WTC11 (cell line): ENCODE measurements at regions of chr10 and their contacts with region 1.

Region 1: GRCh38 chr10:80924063-80924952 is 386.6 kb downstream of the SH2D4B start:
- DNase-seq: peak; percentile 69
- ATAC-seq: peak; percentile 86
- H3K4me3 Mint-ChIP-seq: no peak overlapping the region
- H3K27ac Mint-ChIP-seq: no peak overlapping the region
- H3K4me1 Mint-ChIP-seq: peaks cover 44% of the 10 kb centered on the region
- H3K27me3 Mint-ChIP-seq: no peaks in the 10 kb centered on the region; the same call in 1 of the 2 replicates
- CTCF ChIP-seq: peak; percentile 45

Region 2: GRCh38 chr10:80699602-80700039 is 224.7 kb before region 1 on chr10:
- CTCF ChIA-PET with region 1: interaction called, 19 read pairs
- POLR2A ChIA-PET with region 1: no interaction called
- DNase-seq: peak; percentile 95
- ATAC-seq: peak; percentile 93
- H3K4me3 Mint-ChIP-seq: no peak overlapping the region
- H3K27ac Mint-ChIP-seq: no peak overlapping the region
- H3K4me1 Mint-ChIP-seq: peaks cover 26% of the 10 kb centered on the region
- H3K27me3 Mint-ChIP-seq: no peaks in the 10 kb centered on the region
- CTCF ChIP-seq: peak; percentile 84

Region 3: DNA sequence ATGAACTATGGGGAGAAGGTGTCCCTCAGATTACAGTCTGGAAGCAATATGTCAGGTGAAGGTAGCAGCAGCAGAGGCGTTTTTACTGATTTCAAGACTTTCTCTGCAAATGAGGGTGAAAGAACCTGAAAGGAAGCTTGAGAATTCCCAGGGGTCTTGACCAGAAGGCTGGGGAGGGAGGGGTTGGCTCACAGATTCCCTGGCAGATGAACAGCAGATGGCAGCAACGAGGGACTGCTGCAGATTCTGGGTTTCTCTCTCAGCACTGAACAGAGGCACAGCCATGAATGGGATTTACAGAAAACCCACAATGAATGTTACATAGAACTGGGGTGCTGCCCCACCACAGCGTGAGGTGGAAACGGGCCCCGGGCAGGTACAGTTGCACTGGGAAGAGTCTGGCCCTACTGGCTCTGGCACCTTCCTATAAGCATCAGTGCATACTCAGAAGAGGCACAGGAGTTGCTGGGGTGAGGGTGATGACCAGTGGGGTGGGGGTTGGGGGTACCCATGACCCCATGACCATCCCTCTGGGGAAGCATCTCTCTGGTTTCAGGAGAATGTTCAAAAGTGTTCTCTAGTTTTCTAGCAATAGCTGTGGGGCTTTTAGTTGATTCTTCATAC is 68.8 kb before region 1 on chr10:
- CTCF ChIA-PET with region 1: interaction called, 37 read pairs
- POLR2A ChIA-PET with region 1: no interaction called
- DNase-seq: peak; percentile 71
- ATAC-seq: peak; percentile 99
- H3K4me3 Mint-ChIP-seq: no peak overlapping the region
- H3K27ac Mint-ChIP-seq: no peak overlapping the region
- H3K4me1 Mint-ChIP-seq: peaks cover 20% of the 10 kb centered on the region
- H3K27me3 Mint-ChIP-seq: peaks cover 4% of the 10 kb centered on the region; the same call in 1 of the 2 replicates
- CTCF ChIP-seq: 0 out of 2 replicates have a peak, but pooled peaks have one; percentile 27

Region 4: DNA sequence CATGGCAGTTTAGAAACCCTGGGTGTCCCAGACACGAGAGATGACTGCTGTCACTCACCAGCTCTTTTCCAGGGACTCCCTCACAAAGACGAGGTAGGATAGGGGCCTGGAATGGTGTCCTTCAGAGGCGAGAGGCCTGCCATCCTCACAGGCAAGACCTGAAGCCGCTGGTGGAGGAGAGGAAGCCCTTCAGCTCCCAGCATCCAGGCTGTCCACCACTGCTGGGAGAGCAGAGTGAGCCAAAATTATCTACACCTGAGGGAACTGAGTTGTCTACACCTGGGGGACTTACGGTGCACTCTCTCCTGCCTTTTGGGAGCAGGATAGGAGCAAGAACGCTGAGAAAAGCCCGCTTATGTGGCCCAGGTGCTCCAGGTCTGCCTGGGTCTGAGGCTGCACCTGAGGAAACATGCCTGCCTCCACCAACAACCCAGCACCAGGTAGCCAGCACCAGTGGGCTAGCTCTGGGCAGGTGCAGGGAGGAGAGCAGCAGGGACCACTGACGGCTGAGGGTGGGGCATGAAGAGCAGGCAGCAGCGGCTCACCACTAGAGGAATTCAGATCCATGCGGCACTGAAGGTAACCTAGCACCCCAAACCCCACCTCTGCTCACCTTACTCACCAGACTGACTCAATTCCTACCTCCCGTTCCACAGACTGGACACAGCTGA is 29.4 kb before region 1 on chr10:
- CTCF ChIA-PET with region 1: interaction called, 19 read pairs
- POLR2A ChIA-PET with region 1: no interaction called
- DNase-seq: peak; percentile 22
- ATAC-seq: peak; percentile 65
- H3K4me3 Mint-ChIP-seq: peak overlapping the region; percentile 50
- H3K27ac Mint-ChIP-seq: peak overlapping the region; percentile 78
- H3K4me1 Mint-ChIP-seq: peaks cover 86% of the 10 kb centered on the region
- H3K27me3 Mint-ChIP-seq: peaks cover 98% of the 10 kb centered on the region
- CTCF ChIP-seq: no peak

Region 5: GRCh38 chr10:80908611-80909010 is 15.7 kb before region 1 on chr10:
- CTCF ChIA-PET with region 1: interaction called, 20 read pairs
- POLR2A ChIA-PET with region 1: no interaction called
- DNase-seq: no peak
- ATAC-seq: no peak
- H3K4me3 Mint-ChIP-seq: no peak overlapping the region
- H3K27ac Mint-ChIP-seq: no peak overlapping the region
- H3K4me1 Mint-ChIP-seq: peaks cover 23% of the 10 kb centered on the region
- H3K27me3 Mint-ChIP-seq: peaks cover 7% of the 10 kb centered on the region
- CTCF ChIP-seq: no peak

Region 6: DNA sequence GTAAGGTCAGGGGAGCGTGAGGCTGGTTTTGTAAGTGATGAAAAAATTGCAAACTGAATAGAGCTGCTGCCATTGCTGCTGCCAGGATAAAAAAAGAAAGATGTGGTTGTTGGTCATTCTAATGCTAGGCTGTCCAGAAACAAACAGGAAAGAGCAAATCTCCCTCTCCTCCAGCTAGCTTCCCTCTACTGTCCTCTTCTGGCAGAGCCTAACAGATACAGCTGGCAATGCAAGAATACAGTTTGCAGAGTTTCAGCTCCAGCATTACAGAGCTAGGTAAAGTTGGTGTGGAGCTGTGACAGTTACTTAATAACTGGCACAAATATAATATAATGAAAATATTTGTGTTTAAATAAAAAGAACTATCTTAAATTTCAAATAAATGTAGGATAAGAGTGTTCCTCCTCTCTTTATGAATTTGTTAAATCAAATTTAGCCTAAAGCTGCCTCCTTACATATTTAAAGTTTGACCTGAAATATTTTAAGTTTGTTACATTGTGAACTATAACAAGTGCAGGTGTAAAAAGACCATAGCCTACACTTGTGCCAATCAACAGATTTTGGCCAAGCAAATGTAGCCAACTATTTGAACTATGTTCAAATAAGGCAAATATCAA is 21.1 kb after region 1 on chr10:
- CTCF ChIA-PET with region 1: interaction called, 47 read pairs
- POLR2A ChIA-PET with region 1: no interaction called
- DNase-seq: no peak
- ATAC-seq: peak; percentile 98
- H3K4me3 Mint-ChIP-seq: no peak overlapping the region
- H3K27ac Mint-ChIP-seq: no peak overlapping the region
- H3K4me1 Mint-ChIP-seq: peaks cover 48% of the 10 kb centered on the region
- H3K27me3 Mint-ChIP-seq: no peaks in the 10 kb centered on the region; the same call in 1 of the 2 replicates
- CTCF ChIP-seq: peak; percentile 45; the same call in 1 of the 2 replicates